ENCODE measurements at regions of chr3 and their contacts with region 1.

Region 1: DNA sequence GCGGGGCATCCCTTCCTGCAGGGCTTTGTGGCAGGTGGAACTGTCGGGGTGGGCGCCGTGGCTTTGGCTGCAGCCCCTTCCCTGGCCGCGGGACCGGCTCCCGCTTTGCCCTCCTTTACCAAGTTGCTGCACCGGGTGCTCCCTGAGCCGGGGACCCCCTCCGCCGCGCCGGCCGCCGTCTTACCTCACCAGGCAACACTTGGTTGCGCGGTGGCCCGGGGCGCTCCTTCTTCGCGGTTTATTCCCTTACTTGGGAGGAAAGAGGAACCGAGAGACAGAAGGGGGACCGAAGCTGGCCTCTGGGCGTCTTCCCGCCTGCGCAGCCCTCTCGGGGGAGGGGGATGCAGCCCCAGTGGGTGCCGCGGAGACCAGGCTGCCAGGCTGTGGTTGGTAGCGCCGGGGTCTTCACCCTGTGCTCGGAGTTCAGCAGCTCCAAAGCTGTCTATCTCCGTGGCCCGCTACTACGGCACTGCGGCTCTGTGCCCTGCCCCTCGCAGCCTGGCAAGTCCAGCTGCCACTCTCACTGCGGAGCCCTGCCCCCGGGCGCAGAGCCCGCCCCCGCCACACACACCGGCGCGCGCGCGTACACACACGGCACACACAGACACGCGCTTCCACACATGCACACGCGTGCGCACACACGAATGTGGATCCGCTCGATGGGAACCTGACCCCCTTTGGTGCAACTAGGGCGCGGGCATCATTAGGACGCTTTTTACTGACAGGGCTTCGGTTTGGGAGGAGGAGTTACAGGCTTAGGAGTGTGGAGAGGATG is at the start of gene DGKG:
- DNase-seq: peak in 1 of 2 donors; percentile 87
- H3K4me3 ChIP-seq: peak within 1 kb of the TSS; percentile 70 to 84
- H3K27ac ChIP-seq: peak within 1 kb of the TSS; percentile 42 to 61
- H3K4me1 ChIP-seq: peaks cover 0 to 23% of the 10 kb centered on the region in 2 donors
- H3K27me3 ChIP-seq: no peaks in the 10 kb centered on the region
- CTCF ChIP-seq: no peak
- total RNA-seq, gene DGKG: 11.1 TPM

Region 2: GRCh38 chr3:186108941-186109865 is 252.7 kb before region 1 on chr3 and contains the start of gene ETV5:
- intact Hi-C with region 1: loop called (anchors 2 kb)
- DNase-seq: peak; percentile 100
- H3K4me3 ChIP-seq: peak within 1 kb of the TSS; percentile 73 to 95
- H3K27ac ChIP-seq: peak within 1 kb of the TSS; percentile 91 to 95
- H3K4me1 ChIP-seq: peaks cover 0 to 20% of the 10 kb centered on the region in 2 donors
- H3K27me3 ChIP-seq: no peaks in the 10 kb centered on the region
- CTCF ChIP-seq: peak in 1 of 3 experiments; percentile 29
- total RNA-seq, gene ETV5: 15.8 TPM

Region 3: GRCh38 chr3:186138272-186138981 is 223.5 kb before region 1 on chr3:
- intact Hi-C with region 1: no loop called
- DNase-seq: peak in 1 of 2 donors; percentile 50
- H3K4me3 ChIP-seq: no peak overlapping the region
- H3K27ac ChIP-seq: no peak overlapping the region
- H3K4me1 ChIP-seq: no peaks in the 10 kb centered on the region
- H3K27me3 ChIP-seq: no peaks in the 10 kb centered on the region
- CTCF ChIP-seq: no peak

Region 4: DNA sequence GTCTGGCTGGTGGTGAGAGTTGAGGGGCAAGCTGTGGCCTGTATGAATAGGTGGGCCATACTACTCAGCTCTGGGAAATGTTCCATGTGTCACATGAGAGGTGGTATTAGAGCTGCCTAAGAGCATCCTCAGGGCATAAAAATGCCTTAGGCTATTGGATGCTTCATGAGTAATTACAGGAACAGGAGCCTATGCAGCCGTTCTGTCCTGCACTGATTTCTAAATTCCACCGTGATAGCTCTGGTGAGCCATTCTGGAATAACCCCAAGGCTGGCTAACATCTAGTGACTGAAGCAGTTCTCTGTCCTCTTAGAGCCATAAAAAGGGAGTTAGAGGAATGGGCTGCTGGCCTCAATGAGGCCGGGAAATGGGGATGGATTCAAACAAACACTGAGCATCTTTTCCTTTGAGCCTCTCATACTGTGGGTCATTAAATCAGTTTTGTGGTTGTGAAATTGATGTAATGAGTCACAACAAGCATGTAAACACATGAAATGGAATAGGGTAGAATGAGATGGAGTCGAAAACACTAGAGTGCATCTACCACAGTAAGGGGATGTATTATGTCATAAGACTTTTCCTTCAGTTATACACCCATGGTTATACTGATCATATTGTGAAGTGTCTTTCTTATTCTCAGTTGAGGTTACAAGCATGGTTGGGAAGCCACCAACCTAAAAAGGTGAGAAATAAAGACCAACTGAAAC is 40.9 kb before region 1 on chr3:
- intact Hi-C with region 1: no loop called
- DNase-seq: no peak
- H3K4me3 ChIP-seq: no peak overlapping the region
- H3K27ac ChIP-seq: no peak overlapping the region
- H3K4me1 ChIP-seq: no peaks in the 10 kb centered on the region
- H3K27me3 ChIP-seq: no peaks in the 10 kb centered on the region
- CTCF ChIP-seq: no peak

Region 5: GRCh38 chr3:186406669-186407635 is 45.0 kb after region 1 on chr3:
- intact Hi-C with region 1: loop called (anchors 2 kb)
- DNase-seq: peak; percentile 23 to 91
- H3K4me3 ChIP-seq: no peak overlapping the region
- H3K27ac ChIP-seq: peak overlapping the region; percentile 90
- H3K4me1 ChIP-seq: peaks cover 5 to 12% of the 10 kb centered on the region in 2 donors
- H3K27me3 ChIP-seq: no peaks in the 10 kb centered on the region
- CTCF ChIP-seq: no peak

Region 6: DNA sequence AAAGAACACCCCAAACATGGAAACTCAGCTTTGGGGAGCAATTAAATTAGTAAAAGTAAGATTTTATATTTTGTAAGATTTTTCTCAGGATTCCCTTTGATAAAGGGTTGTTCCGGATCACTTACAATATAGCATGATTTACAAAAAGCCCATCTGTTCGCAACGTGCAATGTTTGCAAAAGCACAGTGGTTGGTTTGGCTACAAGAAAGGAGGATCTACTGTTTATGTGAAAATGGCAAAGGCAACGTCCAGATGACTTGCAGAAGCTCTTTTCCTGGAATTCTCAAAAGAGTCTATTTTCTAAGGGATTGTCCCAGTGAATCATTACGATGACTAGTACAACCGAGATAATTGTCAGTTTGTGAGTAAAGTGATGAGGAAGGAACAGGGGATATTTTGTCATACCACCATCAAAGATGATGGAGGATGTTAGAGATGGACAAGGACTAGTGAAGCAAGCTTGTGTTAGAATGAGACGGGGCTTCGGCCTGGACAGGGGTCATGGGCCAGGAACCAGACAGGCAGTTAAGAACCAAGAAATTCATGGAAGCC is 110.6 kb after region 1 on chr3:
- intact Hi-C with region 1: no loop called
- DNase-seq: no peak
- H3K4me3 ChIP-seq: no peak overlapping the region
- H3K27ac ChIP-seq: no peak overlapping the region
- H3K4me1 ChIP-seq: no peaks in the 10 kb centered on the region
- H3K27me3 ChIP-seq: no peaks in the 10 kb centered on the region
- CTCF ChIP-seq: no peak

Region 7: GRCh38 chr3:186493525-186494255 is 131.7 kb after region 1 on chr3:
- intact Hi-C with region 1: loop called (anchors 5 kb)
- DNase-seq: peak in 1 of 2 donors; percentile 54
- H3K4me3 ChIP-seq: peak overlapping the region in 1 of 2 donors; percentile 37
- H3K27ac ChIP-seq: peak overlapping the region; percentile 64 to 69
- H3K4me1 ChIP-seq: peaks cover 0 to 29% of the 10 kb centered on the region in 2 donors
- H3K27me3 ChIP-seq: no peaks in the 10 kb centered on the region
- CTCF ChIP-seq: no peak

Measured in ascending aorta (tissue), 2 donors.